OCI-LY7 (cell line): ENCODE measurements at regions of chr6 and their contacts with region 1.

Region 1: DNA sequence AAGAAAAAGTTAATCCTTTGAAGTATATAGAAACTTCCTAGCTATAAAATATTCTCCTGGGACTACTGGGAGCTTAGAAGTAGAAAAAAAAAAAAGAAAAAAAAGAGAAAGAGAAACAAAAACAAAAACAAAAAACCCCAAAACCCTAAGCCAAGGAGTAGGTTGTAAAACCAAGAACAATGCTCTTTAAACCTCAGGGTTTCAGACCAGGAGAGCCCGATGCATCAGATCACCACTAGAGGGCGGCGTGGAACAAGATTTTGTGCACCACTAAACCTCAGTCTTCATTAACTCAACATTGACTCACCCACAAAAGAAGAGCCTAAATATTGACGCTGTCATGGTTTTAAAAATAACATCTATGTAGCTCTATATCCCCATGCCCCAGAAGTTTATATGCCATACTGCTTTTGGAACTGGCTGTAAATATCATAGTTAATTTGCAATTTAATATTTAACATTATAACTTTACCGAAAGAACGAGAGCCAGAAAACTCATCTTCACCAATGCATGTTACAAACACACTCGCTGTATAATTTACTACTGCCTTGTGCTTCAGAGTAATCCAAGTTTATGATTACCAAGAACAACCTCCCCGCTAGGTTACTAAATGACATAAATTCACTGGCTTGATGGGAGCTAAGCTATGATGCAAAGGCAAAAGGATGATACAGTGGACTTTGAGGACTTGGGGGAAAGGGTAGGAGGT is 19.2 kb downstream of the MCUR1 start:
- DNase-seq: peak; percentile 80
- H3K4me3 ChIP-seq: no peak overlapping the region
- H3K27ac ChIP-seq: no peak overlapping the region
- H3K4me1 ChIP-seq: no peaks in the 10 kb centered on the region
- CTCF ChIP-seq: peak; percentile 99

Region 2: GRCh38 chr6:13581700-13582229 is 213.4 kb before region 1 on chr6:
- CTCF ChIA-PET with region 1: no interaction called
- POLR2A ChIA-PET with region 1: no interaction called
- intact Hi-C with region 1: no loop called
- DNase-seq: no peak
- H3K4me3 ChIP-seq: no peak overlapping the region
- H3K27ac ChIP-seq: no peak overlapping the region
- H3K4me1 ChIP-seq: no peaks in the 10 kb centered on the region
- CTCF ChIP-seq: no peak

Region 3: GRCh38 chr6:13711733-13712598 is 83.2 kb before region 1 on chr6 and contains the start of gene RANBP9:
- CTCF ChIA-PET with region 1: no interaction called
- POLR2A ChIA-PET with region 1: no interaction called
- intact Hi-C with region 1: no loop called
- DNase-seq: peak; percentile 95
- H3K4me3 ChIP-seq: peak within 1 kb of the TSS; percentile 74
- H3K27ac ChIP-seq: peak within 1 kb of the TSS; percentile 78
- H3K4me1 ChIP-seq: peaks cover 20% of the 10 kb centered on the region
- CTCF ChIP-seq: no peak
- total RNA-seq, gene RANBP9: 20.5 and 22.2 TPM in 2 replicates

Region 4: GRCh38 chr6:13814176-13814937 is 19.2 kb after region 1 on chr6 and contains the start of gene MCUR1:
- CTCF ChIA-PET with region 1: no interaction called
- POLR2A ChIA-PET with region 1: interaction called, 10 read pairs
- intact Hi-C with region 1: no loop called
- DNase-seq: peak; percentile 94
- H3K4me3 ChIP-seq: peak within 1 kb of the TSS; percentile 86
- H3K27ac ChIP-seq: peak within 1 kb of the TSS; percentile 87
- H3K4me1 ChIP-seq: peaks cover 30% of the 10 kb centered on the region
- CTCF ChIP-seq: peak; percentile 38; the same call in 1 of the 2 replicates
- total RNA-seq, gene MCUR1: 11.9 and 17.3 TPM in 2 replicates

Region 5: GRCh38 chr6:13873285-13874190 is 78.3 kb after region 1 on chr6:
- CTCF ChIA-PET with region 1: no interaction called
- POLR2A ChIA-PET with region 1: interaction called, 3 read pairs
- intact Hi-C with region 1: loop called (anchors 5 kb)
- DNase-seq: peak; percentile 49
- H3K4me3 ChIP-seq: no peak overlapping the region
- H3K27ac ChIP-seq: no peak overlapping the region
- H3K4me1 ChIP-seq: no peaks in the 10 kb centered on the region
- CTCF ChIP-seq: peak; percentile 84

Region 6: DNA sequence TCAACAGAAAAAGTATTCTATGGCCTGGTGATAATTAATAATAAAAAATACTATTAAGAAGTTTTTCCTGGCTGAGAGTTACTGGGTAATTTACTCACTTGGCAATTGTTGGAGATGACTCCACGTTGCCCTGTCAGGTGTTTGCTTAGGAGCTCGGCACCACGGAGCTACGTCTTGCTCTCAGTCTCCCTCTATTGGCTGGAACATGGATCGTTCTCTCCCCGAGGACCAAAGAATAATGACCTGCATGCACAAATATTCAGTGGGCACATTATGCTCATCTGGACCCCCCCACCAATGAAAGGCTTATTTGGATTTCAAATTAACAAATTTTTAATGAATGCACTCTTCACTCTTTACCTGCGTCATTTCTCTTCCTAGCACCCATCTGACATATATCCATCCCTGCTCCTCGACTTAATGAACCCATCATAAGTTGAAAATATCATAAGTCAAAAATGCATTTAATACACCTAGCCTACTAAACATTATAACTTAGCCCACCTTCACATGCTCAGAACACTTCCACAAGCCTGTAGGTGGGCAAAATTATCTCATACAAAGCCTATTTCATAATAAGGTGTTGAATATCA is 251.4 kb after region 1 on chr6:
- CTCF ChIA-PET with region 1: no interaction called
- POLR2A ChIA-PET with region 1: no interaction called
- intact Hi-C with region 1: loop called (anchors 5 kb)
- DNase-seq: peak; percentile 63
- H3K4me3 ChIP-seq: no peak overlapping the region
- H3K27ac ChIP-seq: no peak overlapping the region
- H3K4me1 ChIP-seq: no peaks in the 10 kb centered on the region
- CTCF ChIP-seq: peak; percentile 83

Region 7: GRCh38 chr6:14066782-14067406 is 271.7 kb after region 1 on chr6:
- CTCF ChIA-PET with region 1: interaction called, 3 read pairs
- POLR2A ChIA-PET with region 1: interaction called, 4 read pairs
- intact Hi-C with region 1: loop called (anchors 2 kb)
- DNase-seq: peak; percentile 75
- H3K4me3 ChIP-seq: no peak overlapping the region
- H3K27ac ChIP-seq: no peak overlapping the region
- H3K4me1 ChIP-seq: peaks cover 3% of the 10 kb centered on the region
- CTCF ChIP-seq: peak; percentile 93

Region 8: DNA sequence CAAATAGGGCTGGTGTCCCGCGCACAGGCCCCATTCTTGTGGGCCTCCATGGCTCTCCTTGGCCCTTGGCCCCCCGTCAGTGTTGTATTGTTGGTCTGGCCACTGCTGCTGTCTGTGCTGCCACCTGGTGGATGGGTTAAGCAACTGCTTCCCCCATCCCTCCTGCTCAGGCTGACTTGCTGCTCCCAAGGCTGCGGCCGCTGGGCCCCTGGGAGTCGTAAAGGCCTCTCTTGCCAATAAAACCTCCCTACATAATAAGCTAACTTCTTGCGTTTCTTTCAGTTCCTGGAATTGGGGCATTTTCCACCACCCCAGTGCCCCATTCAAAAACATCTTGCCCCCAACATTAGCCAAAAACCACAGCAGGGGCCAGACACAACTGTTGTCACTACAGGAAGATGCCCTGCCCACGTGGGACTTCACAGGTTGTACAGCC is 349.5 kb after region 1 on chr6:
- CTCF ChIA-PET with region 1: no interaction called
- POLR2A ChIA-PET with region 1: no interaction called
- intact Hi-C with region 1: loop called (anchors 2 kb)
- DNase-seq: peak; percentile 80
- H3K4me3 ChIP-seq: no peak overlapping the region
- H3K27ac ChIP-seq: no peak overlapping the region
- H3K4me1 ChIP-seq: no peaks in the 10 kb centered on the region
- CTCF ChIP-seq: peak; percentile 96